ENCODE measurements at regions of chr5 and their contacts with region 1.

Region 1: DNA sequence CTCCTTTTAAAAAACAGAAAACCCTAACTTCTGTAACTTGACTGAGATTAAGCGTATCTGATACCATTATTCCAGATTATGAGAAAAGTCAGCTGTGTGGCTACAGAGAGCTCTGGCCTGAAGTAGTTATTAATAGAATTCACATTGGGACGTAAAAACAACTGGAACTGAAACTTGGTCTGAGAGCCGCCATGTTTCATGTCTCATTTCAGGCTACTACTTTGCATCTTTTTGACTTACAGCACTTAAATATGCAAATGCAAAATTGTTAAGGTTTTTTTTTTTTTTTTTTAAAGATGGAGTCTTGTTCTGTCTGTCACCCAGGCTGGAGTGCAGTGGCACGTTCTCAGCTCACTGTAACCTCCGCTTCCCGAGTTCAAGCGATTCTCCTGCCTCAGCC is 25.2 kb downstream of the MAP3K1 start:
- DNase-seq: no peak
- ATAC-seq: no peak
- H3K4me3 ChIP-seq: no peak overlapping the region
- H3K27ac ChIP-seq: peak overlapping the region in 1 of 4 donors; percentile 9
- H3K4me1 ChIP-seq: peaks cover 78% of the 10 kb centered on the region
- H3K27me3 ChIP-seq: no peaks in the 10 kb centered on the region
- CTCF ChIP-seq: no peak
- POLR2A ChIP-seq: no peak

Region 2: GRCh38 chr5:56270568-56271392 is 569.8 kb before region 1 on chr5:
- intact Hi-C with region 1: loop called (anchors 5 kb)
- DNase-seq: peak; percentile 85 to 87 (median 86)
- ATAC-seq: peak; percentile 100
- H3K4me3 ChIP-seq: no peak overlapping the region
- H3K27ac ChIP-seq: peak overlapping the region in 2 of 4 donors; percentile 33 to 45
- H3K4me1 ChIP-seq: no peaks in the 10 kb centered on the region
- H3K27me3 ChIP-seq: no peaks in the 10 kb centered on the region
- CTCF ChIP-seq: peak; percentile 93 to 99 (median 98)
- POLR2A ChIP-seq: no peak